SK-N-SH (cell line): ENCODE measurements at regions of chr14 and their contacts with region 1.

Region 1: DNA sequence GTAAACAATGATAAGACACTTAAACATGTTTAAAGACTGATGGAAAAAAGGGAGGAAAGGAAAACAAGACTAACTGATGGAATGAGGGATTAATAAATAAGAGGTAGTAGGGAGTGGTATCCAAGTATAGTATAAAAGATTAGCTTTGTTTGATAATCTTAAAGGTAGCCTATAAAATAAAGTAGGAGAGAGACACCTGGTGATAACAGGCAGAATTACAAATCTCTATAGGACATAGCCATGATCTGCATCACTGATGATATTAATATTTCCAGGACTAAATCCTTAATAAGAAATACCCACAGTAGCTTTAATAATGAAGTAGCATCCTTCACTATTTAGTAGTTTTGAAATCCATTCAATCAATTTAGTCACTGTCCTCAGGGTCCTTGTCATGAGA is 30.4 kb downstream of the DLGAP5 start:
- DNase-seq: peak; percentile 50
- H3K4me3 ChIP-seq: no peak overlapping the region
- H3K27ac ChIP-seq: no peak overlapping the region
- H3K4me1 ChIP-seq: no peaks in the 10 kb centered on the region
- H3K27me3 ChIP-seq: no peaks in the 10 kb centered on the region
- CTCF ChIP-seq: peak; percentile 77
- EP300 ChIP-seq: no peak
- RAD21 ChIP-seq: peak; percentile 82

Region 2: GRCh38 chr14:55071870-55072640 is 88.9 kb before region 1 on chr14:
- CTCF ChIA-PET with region 1: interaction called, 13 read pairs
- POLR2A ChIA-PET with region 1: no interaction called
- DNase-seq: no peak
- H3K4me3 ChIP-seq: no peak overlapping the region
- H3K27ac ChIP-seq: peak overlapping the region; percentile 17 to 93; a peak in 3 of 4 replicates
- H3K4me1 ChIP-seq: peaks cover 8 to 22% of the 10 kb centered on the region in 2 experiments; a peak in 3 of 4 replicates
- H3K27me3 ChIP-seq: no peaks in the 10 kb centered on the region
- CTCF ChIP-seq: no peak
- EP300 ChIP-seq: no peak
- RAD21 ChIP-seq: no peak

Region 3: DNA sequence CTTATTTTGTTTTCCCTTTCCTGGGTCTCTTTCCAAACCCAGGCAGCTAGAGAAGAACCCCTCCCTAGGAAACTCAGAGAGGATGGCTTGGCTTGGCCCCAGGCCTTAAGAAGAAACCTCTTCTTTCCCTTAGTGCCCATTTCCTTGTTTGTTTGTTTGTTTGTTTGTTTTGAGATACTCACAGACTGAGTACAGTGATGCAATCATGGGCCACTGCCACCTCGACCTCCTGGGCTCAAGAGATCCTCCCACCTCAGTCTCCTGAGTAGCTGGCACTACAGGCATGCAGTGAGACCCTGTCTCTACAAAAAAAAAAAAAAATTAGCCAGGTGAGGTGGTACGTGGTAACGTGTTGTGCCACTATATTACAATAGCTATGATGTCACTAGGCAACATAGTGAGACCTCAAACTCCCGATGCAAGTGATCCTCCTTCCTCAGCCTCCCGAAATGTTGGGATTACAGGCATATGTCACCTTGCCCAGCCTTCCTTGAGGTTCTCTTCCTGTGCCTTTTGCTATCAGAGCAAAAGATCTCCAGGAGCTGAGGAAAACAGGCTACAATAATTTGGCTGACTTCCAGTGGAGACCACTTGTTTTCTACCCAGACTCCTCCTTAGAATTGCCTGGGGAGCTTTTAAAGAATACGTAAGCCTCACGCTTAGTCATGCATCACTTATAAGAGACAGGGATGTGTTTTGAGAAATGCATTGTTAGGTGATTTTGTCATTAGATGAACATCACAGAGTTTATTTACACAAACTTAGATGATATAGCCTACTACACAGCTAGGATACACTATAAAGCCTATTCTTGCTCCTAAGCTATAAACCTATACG is 66.5 kb before region 1 on chr14:
- CTCF ChIA-PET with region 1: interaction called, 50 read pairs
- POLR2A ChIA-PET with region 1: interaction called, 3 read pairs
- DNase-seq: no peak
- H3K4me3 ChIP-seq: no peak overlapping the region
- H3K27ac ChIP-seq: no peak overlapping the region; a peak in 1 of 4 replicates
- H3K4me1 ChIP-seq: peaks cover 7 to 26% of the 10 kb centered on the region in 2 experiments
- H3K27me3 ChIP-seq: no peaks in the 10 kb centered on the region
- CTCF ChIP-seq: no peak
- EP300 ChIP-seq: no peak
- RAD21 ChIP-seq: no peak

Region 4: GRCh38 chr14:55111122-55111708 is 49.8 kb before region 1 on chr14:
- CTCF ChIA-PET with region 1: no interaction called
- POLR2A ChIA-PET with region 1: no interaction called
- DNase-seq: no peak
- H3K4me3 ChIP-seq: no peak overlapping the region
- H3K27ac ChIP-seq: no peak overlapping the region
- H3K4me1 ChIP-seq: peaks cover 12 to 13% of the 10 kb centered on the region in 2 experiments; a peak in 3 of 4 replicates
- H3K27me3 ChIP-seq: no peaks in the 10 kb centered on the region
- CTCF ChIP-seq: no peak
- EP300 ChIP-seq: no peak
- RAD21 ChIP-seq: no peak

Region 5: GRCh38 chr14:55129428-55130195 is 31.4 kb before region 1 on chr14:
- CTCF ChIA-PET with region 1: interaction called, 22 read pairs
- POLR2A ChIA-PET with region 1: no interaction called
- DNase-seq: peak; percentile 81
- H3K4me3 ChIP-seq: peak overlapping the region; percentile 75 to 79
- H3K27ac ChIP-seq: peak overlapping the region; percentile 55 to 73; a peak in 3 of 4 replicates
- H3K4me1 ChIP-seq: peaks cover 8 to 9% of the 10 kb centered on the region in 2 experiments; a peak in 2 of 4 replicates
- H3K27me3 ChIP-seq: no peaks in the 10 kb centered on the region
- CTCF ChIP-seq: no peak
- EP300 ChIP-seq: no peak
- RAD21 ChIP-seq: no peak